ENCODE measurements at regions of chr19 and their contacts with region 1.

Region 1: GRCh38 chr19:3505598-3506383 is at the start of gene FZR1:
- DNase-seq: peak; percentile 93
- H3K4me3 ChIP-seq: peak within 1 kb of the TSS; percentile 80 to 100 (median 96)
- H3K27ac ChIP-seq: peak within 1 kb of the TSS; percentile 92 to 98 (median 96)
- H3K4me1 ChIP-seq: peaks cover 11 to 59% (median 20%) of the 10 kb centered on the region in 3 donors
- H3K27me3 ChIP-seq: no peaks in the 10 kb centered on the region
- CTCF ChIP-seq: peak in 1 of 6 experiments; percentile 12
- POLR2A ChIP-seq: peak in 3 of 4 donors; percentile 80 to 88 (median 88)
- total RNA-seq, gene FZR1: 26.5 to 46.8 (median 27.2) TPM

Region 2: DNA sequence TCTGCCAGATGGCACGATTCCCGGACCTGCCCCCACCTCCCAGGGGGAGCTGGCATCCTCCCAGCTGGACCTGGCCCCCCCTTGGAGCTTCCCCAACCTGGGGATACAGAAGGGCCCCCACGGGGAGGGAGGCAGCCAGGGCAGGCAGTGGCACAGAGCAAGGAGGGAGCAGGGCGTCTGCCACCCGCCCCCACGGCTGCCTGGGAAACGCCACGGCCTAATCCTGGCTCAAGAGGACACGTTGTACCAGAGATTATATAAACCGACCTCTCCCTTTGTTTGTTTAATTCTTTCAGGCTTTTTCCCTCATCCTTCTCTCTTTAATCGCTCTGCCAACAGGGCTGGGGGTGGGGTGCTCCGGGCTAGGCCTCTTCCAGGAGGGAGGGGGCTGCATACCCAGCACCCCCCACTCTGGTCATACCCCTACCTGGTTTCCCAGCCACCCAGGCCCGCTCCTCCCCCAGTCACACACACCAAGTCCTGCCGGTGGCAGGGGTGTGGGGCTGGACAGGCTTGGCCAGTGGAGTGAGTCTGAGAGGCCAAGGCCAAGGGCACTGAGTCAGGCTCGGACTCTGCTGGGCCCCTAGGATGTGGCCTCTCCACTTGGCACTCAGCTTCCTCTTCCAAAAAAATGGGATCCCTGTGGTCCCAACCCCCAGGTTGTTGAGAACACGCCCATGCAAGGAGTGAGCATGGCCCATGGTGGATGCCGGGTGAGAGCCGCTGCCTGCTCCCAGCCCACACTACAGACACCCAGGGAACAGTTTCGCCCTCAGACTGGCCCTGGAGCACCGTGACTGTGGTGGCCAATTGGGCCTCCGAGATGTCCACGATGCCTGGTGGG is 168.9 kb before region 1 on chr19:
- intact Hi-C with region 1: no loop called
- DNase-seq: no peak
- H3K4me3 ChIP-seq: peak overlapping the region in 2 of 4 donors; percentile 14 to 38
- H3K27ac ChIP-seq: peak overlapping the region; percentile 87 to 92 (median 90)
- H3K4me1 ChIP-seq: peaks cover 35 to 68% (median 45%) of the 10 kb centered on the region in 3 donors
- H3K27me3 ChIP-seq: no peaks in the 10 kb centered on the region
- CTCF ChIP-seq: peak in 2 of 6 experiments; percentile 5 to 13
- POLR2A ChIP-seq: no peak

Region 3: DNA sequence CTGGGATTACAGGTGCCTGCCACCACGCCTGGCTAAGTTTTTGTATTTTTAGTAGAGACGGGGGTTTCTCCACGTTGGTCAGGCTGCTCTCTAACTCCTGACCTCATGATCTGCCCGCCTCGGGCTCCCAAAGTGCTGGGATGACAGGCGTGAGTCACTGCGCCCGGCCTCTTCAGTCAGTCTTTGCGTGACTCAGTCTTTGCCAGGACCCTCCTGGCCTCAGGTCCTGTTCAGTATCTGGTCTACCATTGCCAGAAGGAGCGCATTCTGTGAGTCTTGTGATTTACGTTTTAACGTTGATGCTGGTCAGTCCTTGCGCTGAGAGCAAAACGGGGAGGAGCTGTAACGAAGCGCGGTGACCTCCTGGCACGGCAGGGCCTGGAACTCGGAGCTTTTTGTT is 59.3 kb after region 1 on chr19:
- intact Hi-C with region 1: loop called (anchors 5 kb)
- DNase-seq: no peak
- H3K4me3 ChIP-seq: no peak overlapping the region
- H3K27ac ChIP-seq: no peak overlapping the region
- H3K4me1 ChIP-seq: peaks cover 0 to 9% (median 0%) of the 10 kb centered on the region in 3 donors
- H3K27me3 ChIP-seq: no peaks in the 10 kb centered on the region
- CTCF ChIP-seq: no peak
- POLR2A ChIP-seq: no peak

Measured in esophagus squamous epithelium (tissue), 5 donors.